ENCODE measurements at regions of chr10 and their contacts with region 1.

Region 1: GRCh38 chr10:3785257-3785850 is 345 bp upstream of the KLF6 start:
- DNase-seq: peak; percentile 98 to 100 (median 100)
- ATAC-seq: peak; percentile 67 to 76
- H3K4me3 Mint-ChIP-seq: peak overlapping the region; percentile 84 to 100 (median 95)
- H3K27ac Mint-ChIP-seq: peak overlapping the region; percentile 94 to 99 (median 98)
- H3K4me1 Mint-ChIP-seq: peaks cover 28 to 50% (median 31%) of the 10 kb centered on the region in 4 donors
- H3K27me3 Mint-ChIP-seq: no peaks in the 10 kb centered on the region

Region 2: GRCh38 chr10:3761021-3761686 is 24.2 kb before region 1 on chr10:
- POLR2A ChIA-PET with region 1: interaction called, 34 read pairs
- DNase-seq: no peak
- ATAC-seq: no peak
- H3K4me3 Mint-ChIP-seq: no peak overlapping the region
- H3K27ac Mint-ChIP-seq: peak overlapping the region in 2 of 10 donors; percentile 57 to 84
- H3K4me1 Mint-ChIP-seq: peaks cover 14 to 87% (median 31%) of the 10 kb centered on the region in 4 donors
- H3K27me3 Mint-ChIP-seq: peaks cover 0 to 29% (median 12%) of the 10 kb centered on the region in 5 donors

Region 3: GRCh38 chr10:3803295-3803926 is 18.1 kb after region 1 on chr10:
- POLR2A ChIA-PET with region 1: interaction called, 222 read pairs
- DNase-seq: no peak
- ATAC-seq: no peak
- H3K4me3 Mint-ChIP-seq: peak overlapping the region in 2 of 10 donors; percentile 18 to 62
- H3K27ac Mint-ChIP-seq: peak overlapping the region in 7 of 10 donors; percentile 68 to 99 (median 95)
- H3K4me1 Mint-ChIP-seq: peaks cover 16 to 60% (median 38%) of the 10 kb centered on the region in 4 donors
- H3K27me3 Mint-ChIP-seq: no peaks in the 10 kb centered on the region

Region 4: GRCh38 chr10:3828404-3829155 is 43.2 kb after region 1 on chr10:
- POLR2A ChIA-PET with region 1: interaction called, 48 read pairs
- DNase-seq: peak in 3 of 10 donors; percentile 46 to 51 (median 50)
- ATAC-seq: peak; percentile 45 to 60
- H3K4me3 Mint-ChIP-seq: peak overlapping the region; percentile 65 to 86 (median 82)
- H3K27ac Mint-ChIP-seq: peak overlapping the region; percentile 84 to 95 (median 88)
- H3K4me1 Mint-ChIP-seq: peaks cover 11 to 36% (median 20%) of the 10 kb centered on the region in 4 donors
- H3K27me3 Mint-ChIP-seq: no peaks in the 10 kb centered on the region

Region 5: GRCh38 chr10:3852147-3852904 is 67.0 kb after region 1 on chr10:
- POLR2A ChIA-PET with region 1: interaction called, 10 read pairs
- DNase-seq: no peak
- ATAC-seq: peak; percentile 39 to 71
- H3K4me3 Mint-ChIP-seq: peak overlapping the region in 2 of 10 donors; percentile 16 to 37
- H3K27ac Mint-ChIP-seq: peak overlapping the region in 5 of 10 donors; percentile 1 to 87 (median 55)
- H3K4me1 Mint-ChIP-seq: peaks cover 0 to 30% (median 8%) of the 10 kb centered on the region in 4 donors
- H3K27me3 Mint-ChIP-seq: no peaks in the 10 kb centered on the region

Region 6: DNA sequence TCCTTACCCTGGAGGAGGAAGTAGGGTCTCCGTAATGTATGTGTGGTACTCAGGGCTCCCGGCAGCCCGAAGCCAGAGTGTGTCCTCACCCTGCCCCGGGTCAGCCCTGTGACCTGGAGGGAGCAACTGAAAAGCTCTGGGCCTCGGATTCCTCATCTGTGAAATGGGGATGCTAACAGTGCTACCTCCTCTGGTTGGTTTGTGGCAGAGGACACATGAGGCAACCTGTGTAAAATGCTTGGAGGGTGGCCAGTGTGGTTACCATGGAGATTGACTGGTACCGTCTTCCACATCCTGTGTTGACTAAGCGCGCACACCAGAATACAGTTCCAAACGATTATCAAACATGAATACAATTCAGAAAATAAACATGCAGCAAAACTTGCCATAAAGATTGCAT is 163.5 kb after region 1 on chr10:
- POLR2A ChIA-PET with region 1: interaction called, 19 read pairs
- DNase-seq: peak in 9 of 10 donors; percentile 31 to 94 (median 77)
- ATAC-seq: peak; percentile 87 to 96
- H3K4me3 Mint-ChIP-seq: peak overlapping the region; percentile 34 to 73 (median 58)
- H3K27ac Mint-ChIP-seq: peak overlapping the region; percentile 60 to 92 (median 81)
- H3K4me1 Mint-ChIP-seq: peaks cover 21 to 62% (median 55%) of the 10 kb centered on the region in 4 donors
- H3K27me3 Mint-ChIP-seq: peaks cover 0 to 2% (median 0%) of the 10 kb centered on the region in 5 donors

Region 7: DNA sequence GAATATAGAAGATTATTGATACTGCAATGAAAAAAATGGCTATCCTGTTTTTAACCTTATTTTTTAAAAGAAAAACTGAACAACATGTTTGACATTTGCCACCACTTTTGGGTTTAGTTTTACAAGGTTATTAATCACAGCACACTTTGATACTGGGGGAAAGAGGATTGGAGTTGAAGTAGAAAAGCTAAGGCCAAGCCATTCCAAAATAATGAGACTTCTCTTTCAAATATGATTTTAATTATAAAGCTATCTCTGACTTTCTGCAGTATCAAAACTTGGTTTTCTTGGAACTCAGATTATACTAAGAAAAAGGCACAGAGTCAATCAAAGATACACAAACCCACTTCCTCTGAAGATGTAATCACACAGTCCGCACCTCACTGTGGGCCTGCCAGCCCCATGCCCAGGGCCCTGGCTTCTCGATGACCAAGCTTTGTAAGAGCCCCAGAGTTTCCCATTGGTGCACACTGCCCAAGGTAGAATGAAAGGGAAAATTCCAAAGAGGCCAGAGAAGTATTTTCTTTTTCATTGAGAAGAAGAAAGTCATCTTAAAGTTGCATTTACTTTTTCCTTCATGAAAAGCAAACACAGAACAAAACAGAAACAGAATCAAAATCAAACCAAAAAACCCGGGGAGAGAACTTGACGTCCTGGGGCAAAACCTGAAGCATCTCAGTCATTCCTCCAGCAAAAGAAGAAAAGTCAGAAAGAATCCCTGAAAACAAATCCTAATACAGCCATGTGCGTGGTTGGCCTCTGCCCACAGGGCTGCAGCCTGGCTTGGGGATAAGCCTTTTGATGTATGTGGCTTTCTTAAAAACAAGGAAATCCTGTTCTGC is 187.3 kb after region 1 on chr10:
- POLR2A ChIA-PET with region 1: interaction called, 21 read pairs
- DNase-seq: peak in 2 of 10 donors; percentile 20 to 35
- ATAC-seq: peak; percentile 86 to 87
- H3K4me3 Mint-ChIP-seq: peak overlapping the region; percentile 60 to 87 (median 80)
- H3K27ac Mint-ChIP-seq: peak overlapping the region; percentile 78 to 98 (median 94)
- H3K4me1 Mint-ChIP-seq: peaks cover 23 to 50% (median 42%) of the 10 kb centered on the region in 4 donors
- H3K27me3 Mint-ChIP-seq: no peaks in the 10 kb centered on the region

Measured in naive thymus-derived CD8-positive, alpha-beta T cell (primary cell).